ENCODE measurements at regions of chr2 and their contacts with region 1.

Region 1: GRCh38 chr2:95022309-95023221 is 2.9 kb upstream of the MAL start:
- DNase-seq: peak; percentile 79
- H3K4me3 Mint-ChIP-seq: peak overlapping the region; percentile 38
- H3K27ac Mint-ChIP-seq: no peak overlapping the region
- H3K4me1 Mint-ChIP-seq: peaks cover 46% of the 10 kb centered on the region
- H3K27me3 Mint-ChIP-seq: no peaks in the 10 kb centered on the region

Region 2: DNA sequence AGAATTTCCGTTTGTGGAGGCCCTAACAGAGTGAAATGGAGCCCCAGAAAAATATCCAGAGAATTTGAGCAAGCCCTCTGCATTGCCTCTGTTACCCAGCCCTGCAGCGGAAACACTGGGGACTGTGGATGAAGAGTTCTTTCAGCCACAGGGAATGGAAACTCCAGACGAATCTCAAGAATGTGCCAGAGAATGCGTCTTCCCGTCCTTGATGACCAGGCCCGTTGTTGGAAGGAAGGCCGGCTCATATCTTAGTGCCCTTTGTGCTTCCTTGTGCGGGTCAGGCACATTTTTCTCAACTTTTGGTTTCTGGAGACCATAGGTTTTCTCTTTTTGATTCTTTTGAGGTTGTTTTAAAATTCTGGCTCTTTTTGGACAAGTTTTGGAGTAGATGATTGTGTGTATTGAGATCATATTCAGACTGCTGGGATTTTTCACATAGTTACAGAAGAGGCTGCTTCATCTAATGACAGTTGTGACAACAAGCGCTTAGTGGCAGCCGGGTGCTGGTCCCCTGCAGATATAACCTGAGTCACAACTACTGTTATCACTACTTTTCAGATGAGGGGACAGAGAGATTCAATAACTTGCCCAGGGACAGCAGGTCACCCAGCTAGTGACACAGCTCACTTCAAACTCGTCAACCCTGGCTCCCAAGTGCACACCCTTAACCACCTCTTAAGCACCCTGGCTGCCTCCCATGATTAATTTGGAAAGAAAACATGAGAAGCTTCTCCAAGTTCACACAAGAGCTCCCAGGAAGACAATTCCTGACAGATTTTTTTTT is 18.7 kb after region 1 on chr2:
- intact Hi-C with region 1: loop called (anchors 2 kb)
- DNase-seq: no peak
- H3K4me3 Mint-ChIP-seq: no peak overlapping the region
- H3K27ac Mint-ChIP-seq: peak overlapping the region; percentile 51
- H3K4me1 Mint-ChIP-seq: peaks cover 51% of the 10 kb centered on the region
- H3K27me3 Mint-ChIP-seq: no peaks in the 10 kb centered on the region

Region 3: DNA sequence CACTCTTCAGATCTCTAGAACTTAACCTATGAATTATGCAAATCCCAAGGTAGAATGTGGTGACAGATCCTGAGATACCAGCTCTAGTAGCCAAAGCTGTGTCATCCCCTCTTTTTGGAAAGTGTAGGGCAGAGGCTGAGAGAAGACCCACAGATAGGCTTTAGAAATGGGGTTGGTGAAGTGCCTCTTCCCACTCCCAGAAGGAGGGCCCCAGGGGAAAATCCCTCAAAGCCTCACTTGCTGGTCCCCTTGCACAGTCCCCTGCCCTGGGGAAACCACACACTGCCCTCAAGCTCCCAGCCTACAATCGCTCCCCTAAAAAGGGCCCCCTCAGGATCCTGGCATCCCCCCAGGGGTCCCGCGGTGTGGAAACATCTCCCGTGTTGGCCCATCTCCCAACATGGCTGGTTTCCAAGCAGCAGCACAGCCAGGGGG is 27.9 kb after region 1 on chr2:
- intact Hi-C with region 1: loop called (anchors 1 kb)
- DNase-seq: no peak
- H3K4me3 Mint-ChIP-seq: no peak overlapping the region
- H3K27ac Mint-ChIP-seq: peak overlapping the region; percentile 90
- H3K4me1 Mint-ChIP-seq: peaks cover 47% of the 10 kb centered on the region
- H3K27me3 Mint-ChIP-seq: no peaks in the 10 kb centered on the region

Region 4: GRCh38 chr2:95062242-95063085 is 39.9 kb after region 1 on chr2:
- intact Hi-C with region 1: no loop called
- DNase-seq: no peak
- H3K4me3 Mint-ChIP-seq: peak overlapping the region; percentile 7
- H3K27ac Mint-ChIP-seq: peak overlapping the region; percentile 67
- H3K4me1 Mint-ChIP-seq: peaks cover 24% of the 10 kb centered on the region
- H3K27me3 Mint-ChIP-seq: no peaks in the 10 kb centered on the region

Region 5: GRCh38 chr2:95076784-95077529 is 54.4 kb after region 1 on chr2:
- intact Hi-C with region 1: loop called (anchors 1 kb)
- DNase-seq: peak; percentile 86
- H3K4me3 Mint-ChIP-seq: peak overlapping the region; percentile 87
- H3K27ac Mint-ChIP-seq: peak overlapping the region; percentile 95
- H3K4me1 Mint-ChIP-seq: peaks cover 70% of the 10 kb centered on the region
- H3K27me3 Mint-ChIP-seq: no peaks in the 10 kb centered on the region

Region 6: GRCh38 chr2:95115418-95115817 is 92.9 kb after region 1 on chr2:
- intact Hi-C with region 1: loop called (anchors 1 kb)
- DNase-seq: peak; percentile 66
- H3K4me3 Mint-ChIP-seq: no peak overlapping the region
- H3K27ac Mint-ChIP-seq: no peak overlapping the region
- H3K4me1 Mint-ChIP-seq: peaks cover 38% of the 10 kb centered on the region
- H3K27me3 Mint-ChIP-seq: no peaks in the 10 kb centered on the region

Region 7: GRCh38 chr2:95165129-95166064 is 142.8 kb after region 1 on chr2 and contains the start of gene ZNF2:
- intact Hi-C with region 1: loop called (anchors 2 kb)
- DNase-seq: peak; percentile 94
- H3K4me3 Mint-ChIP-seq: peak within 1 kb of the TSS; percentile 98
- H3K27ac Mint-ChIP-seq: peak within 1 kb of the TSS; percentile 93
- H3K4me1 Mint-ChIP-seq: peaks cover 19% of the 10 kb centered on the region
- H3K27me3 Mint-ChIP-seq: no peaks in the 10 kb centered on the region
- total RNA-seq, gene ZNF2: 3.3 and 3.6 TPM in 2 replicates

Region 8: DNA sequence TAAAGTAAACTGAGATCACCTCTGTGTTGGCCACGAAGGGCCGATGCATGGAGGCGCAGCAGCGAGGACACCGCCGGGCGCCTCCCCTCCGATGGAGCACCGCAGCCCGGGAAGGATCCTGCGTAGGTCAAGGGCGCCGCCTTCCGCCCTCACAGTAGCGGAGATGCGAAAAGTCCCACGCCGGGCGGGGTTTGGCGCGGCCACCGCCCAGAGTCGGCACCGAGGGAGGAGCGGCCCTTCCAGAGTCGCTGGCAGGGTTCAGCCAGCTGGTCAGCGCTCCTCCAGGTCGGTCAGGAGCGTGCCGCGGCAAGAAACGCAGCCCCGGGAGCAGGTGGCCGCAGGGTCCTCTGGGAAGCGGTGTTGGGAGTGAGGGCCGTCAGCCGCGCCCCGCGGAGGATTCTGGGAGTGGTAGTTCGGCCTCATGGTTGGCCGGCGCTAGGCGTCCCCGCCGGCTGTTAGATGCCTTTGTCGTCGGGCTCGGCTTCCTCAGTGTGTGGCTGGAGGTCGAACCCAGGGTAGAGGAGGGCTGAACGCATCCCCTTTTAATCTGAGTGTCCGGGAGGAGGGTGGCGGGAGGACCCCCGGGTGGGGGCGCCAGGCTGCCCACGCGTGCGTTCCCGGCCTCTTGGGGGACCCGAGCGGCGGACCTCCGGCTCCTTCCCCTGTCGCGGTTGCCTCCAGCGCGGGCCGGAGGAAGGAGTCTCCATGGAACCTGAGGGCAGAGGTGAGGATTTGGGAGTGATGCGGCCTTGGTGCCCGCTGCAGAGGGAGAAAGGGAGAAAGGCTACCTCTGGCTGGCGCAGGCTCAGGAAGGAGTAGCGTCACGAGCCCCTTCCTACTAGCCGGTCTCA is 184.8 kb after region 1 on chr2 and contains the start of gene ZNF892:
- intact Hi-C with region 1: loop called (anchors 5 kb)
- DNase-seq: peak; percentile 75
- H3K4me3 Mint-ChIP-seq: peak within 1 kb of the TSS; percentile 87
- H3K27ac Mint-ChIP-seq: peak within 1 kb of the TSS; percentile 60
- H3K4me1 Mint-ChIP-seq: peaks cover 17% of the 10 kb centered on the region
- H3K27me3 Mint-ChIP-seq: no peaks in the 10 kb centered on the region
- total RNA-seq, gene ZNF892: 4.7 and 4.8 TPM in 2 replicates